Head of caudate nucleus (tissue), 42 donors: ENCODE measurements at regions of chr6 and their contacts with region 1.

Region 1: GRCh38 chr6:117602151-117602898 is at the start of gene GOPC:
- DNase-seq: peak; percentile 92 to 98 (median 96)

Region 2: DNA sequence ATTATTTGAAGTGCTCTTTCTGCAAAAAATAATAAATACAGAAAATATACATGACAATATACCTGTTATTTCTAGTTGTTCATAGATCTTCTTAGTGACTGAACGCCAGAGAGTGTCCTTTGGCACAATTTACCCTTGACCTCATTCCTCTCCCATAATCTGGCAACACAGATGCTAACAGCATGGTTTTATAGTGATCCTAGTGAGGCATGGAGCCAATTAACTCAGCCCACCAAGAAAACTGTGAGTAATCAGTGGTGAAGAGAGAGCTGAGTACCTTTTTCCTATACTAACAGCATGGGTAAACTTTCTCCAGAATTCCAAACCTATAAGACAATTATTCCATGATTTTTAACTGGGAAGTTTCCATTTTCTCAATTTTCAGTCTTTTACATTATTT is 275.9 kb before region 1 on chr6:
- intact Hi-C with region 1: no loop called
- DNase-seq: no peak

Region 3: GRCh38 chr6:117346142-117346930 is 256.0 kb before region 1 on chr6:
- intact Hi-C with region 1: loop called (anchors 10 kb)
- DNase-seq: no peak

Region 4: DNA sequence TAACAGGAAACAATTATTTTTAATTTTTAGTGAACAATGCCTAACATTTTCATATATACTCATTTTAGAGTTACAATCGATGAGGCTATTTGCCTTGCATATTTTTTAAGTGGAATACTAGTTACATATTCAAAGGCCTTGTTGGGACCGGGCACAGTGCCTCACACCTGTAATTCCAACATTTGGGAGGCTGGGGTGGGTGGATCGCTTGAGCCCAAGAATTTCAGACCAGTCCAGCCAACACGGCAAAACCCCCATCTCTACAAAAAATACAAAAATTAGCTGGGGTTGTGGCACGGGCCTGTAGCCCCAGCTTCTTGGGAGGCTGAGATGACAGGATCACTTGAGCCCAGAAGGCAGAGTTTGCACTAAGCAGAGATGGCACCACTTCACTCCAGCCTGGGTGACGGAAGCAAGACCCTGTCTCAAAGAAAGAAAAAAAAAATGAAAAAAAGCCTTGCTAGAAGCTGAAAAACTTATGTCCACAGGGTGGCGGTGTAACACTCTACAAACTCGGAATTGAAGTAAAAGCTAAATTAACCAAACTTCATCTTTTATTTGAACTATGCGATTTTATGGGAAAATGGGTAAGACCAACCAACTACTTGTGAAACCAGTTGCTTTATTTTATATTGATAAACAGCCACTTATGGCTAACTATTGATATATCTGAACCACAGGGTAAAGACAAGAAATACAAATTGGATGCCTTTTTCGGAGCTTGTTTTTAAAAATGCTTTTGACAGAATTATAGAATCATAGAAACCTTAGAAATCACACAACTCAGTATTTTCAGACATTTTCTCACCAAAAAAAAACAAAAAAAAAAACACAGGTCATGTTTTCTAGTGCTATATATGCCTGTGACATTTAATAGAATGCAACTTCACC is 152.5 kb before region 1 on chr6:
- intact Hi-C with region 1: loop called (anchors 10 kb)
- DNase-seq: peak in 35 of 42 donors; percentile 6 to 82 (median 44)

Region 5: DNA sequence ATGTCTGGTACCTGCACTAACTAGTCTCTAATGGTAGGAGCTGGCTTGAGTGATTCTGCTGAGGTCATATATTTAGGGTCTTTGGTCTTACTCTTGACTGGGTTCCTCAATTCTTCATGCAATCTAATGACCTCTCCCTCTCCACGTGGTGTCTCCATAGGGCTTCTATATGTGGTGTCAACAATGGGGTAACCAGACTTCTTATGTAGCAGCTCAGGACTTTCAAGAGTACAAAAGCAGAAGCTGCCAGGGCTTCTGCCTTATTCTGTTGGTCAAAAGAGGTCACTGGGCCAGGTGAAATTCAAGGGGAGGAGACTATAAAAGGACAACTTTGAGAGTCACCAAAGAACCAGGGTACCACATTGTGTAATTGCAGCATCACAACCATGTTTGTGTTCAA is 127.3 kb after region 1 on chr6:
- intact Hi-C with region 1: no loop called
- DNase-seq: no peak